Panc1 (cell line): ENCODE measurements at regions of chr3 and their contacts with region 1.

Region 1: GRCh38 chr3:115918900-115919299 is 295.6 kb downstream of the GAP43 start:
- DNase-seq: no peak
- ATAC-seq: no peak
- H3K4me3 ChIP-seq: no peak overlapping the region
- H3K27ac ChIP-seq: no peak overlapping the region
- H3K4me1 ChIP-seq: no peaks in the 10 kb centered on the region
- H3K27me3 ChIP-seq: no peaks in the 10 kb centered on the region
- CTCF ChIP-seq: no peak

Region 2: DNA sequence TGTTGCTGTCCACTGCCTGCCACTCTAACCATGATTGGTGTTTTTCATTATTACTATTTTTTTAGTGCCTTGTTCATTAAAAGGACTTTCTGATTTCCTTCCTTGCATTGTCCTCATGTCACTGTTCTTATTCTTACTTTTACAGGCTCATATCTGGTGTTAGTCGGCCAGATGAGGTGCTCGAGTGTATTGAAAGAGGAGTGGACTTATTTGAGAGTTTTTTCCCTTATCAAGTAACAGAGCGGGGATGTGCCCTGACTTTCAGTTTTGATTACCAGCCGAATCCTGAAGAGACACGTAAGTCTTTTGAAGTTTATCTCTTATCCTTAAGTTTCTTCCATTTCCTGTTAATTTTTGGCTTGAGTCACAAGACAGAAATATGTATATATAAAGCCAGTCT is 1839.1 kb before region 1 on chr3:
- CTCF ChIA-PET with region 1: no interaction called
- POLR2A ChIA-PET with region 1: interaction called, 15 read pairs
- in situ Hi-C with region 1: no loop called
- intact Hi-C with region 1: no loop called
- DNase-seq: no peak
- ATAC-seq: no peak
- H3K4me3 ChIP-seq: no peak overlapping the region
- H3K27ac ChIP-seq: no peak overlapping the region
- H3K4me1 ChIP-seq: no peaks in the 10 kb centered on the region
- H3K27me3 ChIP-seq: no peaks in the 10 kb centered on the region
- CTCF ChIP-seq: no peak